CD4-positive, alpha-beta T cell (primary cell): ENCODE measurements at regions of chr5 and their contacts with region 1.

Region 1: DNA sequence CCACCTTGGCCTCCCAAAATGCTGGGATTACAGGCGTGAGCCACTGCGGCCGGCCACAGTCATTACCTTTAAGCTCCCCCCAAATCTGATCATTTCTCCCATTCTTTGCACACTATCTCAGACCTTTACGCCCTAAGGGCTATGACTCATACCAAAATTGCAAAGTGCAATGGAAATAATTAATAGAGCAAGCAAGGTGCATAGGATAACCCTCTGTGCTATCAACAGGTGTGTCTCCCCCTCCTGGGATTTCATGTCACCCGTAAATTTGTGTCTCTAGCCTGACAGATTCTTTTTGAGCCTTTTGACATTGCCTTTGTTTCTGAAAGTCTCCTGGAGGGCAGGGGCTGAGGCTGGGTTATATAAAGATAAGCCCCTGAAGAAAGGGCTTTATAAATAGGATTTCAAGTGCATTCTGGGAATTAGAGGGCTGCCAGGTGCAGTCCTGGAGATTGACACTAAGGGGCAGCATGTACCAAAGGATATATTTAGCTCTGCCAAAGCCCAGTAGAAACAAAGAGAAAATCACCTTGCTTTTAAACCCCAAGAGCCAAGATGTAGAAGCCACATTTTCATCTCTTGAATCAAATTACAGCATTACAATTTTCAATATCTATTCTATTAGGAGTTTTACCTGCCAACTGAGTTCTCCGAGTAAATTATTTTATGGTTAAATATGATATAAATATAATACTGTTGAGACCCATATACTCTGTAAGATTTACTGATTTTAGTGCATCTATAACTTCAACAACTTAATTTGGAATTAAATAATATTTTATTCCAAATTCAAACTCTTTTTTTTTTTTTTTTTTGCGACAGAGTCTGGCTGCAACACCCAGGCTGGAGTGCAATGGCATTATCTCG is 18.2 kb downstream of the S100Z start:
- DNase-seq: peak; percentile 24 to 75 (median 51)
- ATAC-seq: peak; percentile 87
- H3K4me3 ChIP-seq: no peak overlapping the region
- H3K4me3 Mint-ChIP-seq: no peak overlapping the region
- H3K27ac ChIP-seq: no peak overlapping the region
- H3K27ac Mint-ChIP-seq: no peak overlapping the region
- H3K4me1 ChIP-seq: no peaks in the 10 kb centered on the region
- H3K4me1 Mint-ChIP-seq: no peaks in the 10 kb centered on the region
- H3K27me3 ChIP-seq: no peaks in the 10 kb centered on the region
- H3K27me3 Mint-ChIP-seq: no peaks in the 10 kb centered on the region
- CTCF ChIP-seq: peak; percentile 67

Region 2: GRCh38 chr5:76908166-76908565 is 40.1 kb after region 1 on chr5:
- CTCF ChIA-PET with region 1: no interaction called
- POLR2A ChIA-PET with region 1: no interaction called
- intact Hi-C with region 1: no loop called
- DNase-seq: no peak
- ATAC-seq: no peak
- H3K4me3 ChIP-seq: no peak overlapping the region
- H3K4me3 Mint-ChIP-seq: no peak overlapping the region
- H3K27ac ChIP-seq: no peak overlapping the region
- H3K27ac Mint-ChIP-seq: no peak overlapping the region
- H3K4me1 ChIP-seq: no peaks in the 10 kb centered on the region
- H3K4me1 Mint-ChIP-seq: no peaks in the 10 kb centered on the region
- H3K27me3 ChIP-seq: no peaks in the 10 kb centered on the region
- H3K27me3 Mint-ChIP-seq: no peaks in the 10 kb centered on the region
- CTCF ChIP-seq: no peak

Region 3: GRCh38 chr5:77076961-77077823 is 209.1 kb after region 1 on chr5:
- CTCF ChIA-PET with region 1: no interaction called
- POLR2A ChIA-PET with region 1: no interaction called
- intact Hi-C with region 1: loop called (anchors 2 to 5 kb)
- DNase-seq: peak in 12 of 14 experiments; percentile 14 to 73 (median 42)
- ATAC-seq: peak; percentile 80
- H3K4me3 ChIP-seq: peak overlapping the region; percentile 19
- H3K4me3 Mint-ChIP-seq: peak overlapping the region; percentile 68
- H3K27ac ChIP-seq: no peak overlapping the region
- H3K27ac Mint-ChIP-seq: no peak overlapping the region
- H3K4me1 ChIP-seq: peaks cover 7% of the 10 kb centered on the region
- H3K4me1 Mint-ChIP-seq: peaks cover 7% of the 10 kb centered on the region
- H3K27me3 ChIP-seq: no peaks in the 10 kb centered on the region
- H3K27me3 Mint-ChIP-seq: no peaks in the 10 kb centered on the region
- CTCF ChIP-seq: peak; percentile 42

Region 4: DNA sequence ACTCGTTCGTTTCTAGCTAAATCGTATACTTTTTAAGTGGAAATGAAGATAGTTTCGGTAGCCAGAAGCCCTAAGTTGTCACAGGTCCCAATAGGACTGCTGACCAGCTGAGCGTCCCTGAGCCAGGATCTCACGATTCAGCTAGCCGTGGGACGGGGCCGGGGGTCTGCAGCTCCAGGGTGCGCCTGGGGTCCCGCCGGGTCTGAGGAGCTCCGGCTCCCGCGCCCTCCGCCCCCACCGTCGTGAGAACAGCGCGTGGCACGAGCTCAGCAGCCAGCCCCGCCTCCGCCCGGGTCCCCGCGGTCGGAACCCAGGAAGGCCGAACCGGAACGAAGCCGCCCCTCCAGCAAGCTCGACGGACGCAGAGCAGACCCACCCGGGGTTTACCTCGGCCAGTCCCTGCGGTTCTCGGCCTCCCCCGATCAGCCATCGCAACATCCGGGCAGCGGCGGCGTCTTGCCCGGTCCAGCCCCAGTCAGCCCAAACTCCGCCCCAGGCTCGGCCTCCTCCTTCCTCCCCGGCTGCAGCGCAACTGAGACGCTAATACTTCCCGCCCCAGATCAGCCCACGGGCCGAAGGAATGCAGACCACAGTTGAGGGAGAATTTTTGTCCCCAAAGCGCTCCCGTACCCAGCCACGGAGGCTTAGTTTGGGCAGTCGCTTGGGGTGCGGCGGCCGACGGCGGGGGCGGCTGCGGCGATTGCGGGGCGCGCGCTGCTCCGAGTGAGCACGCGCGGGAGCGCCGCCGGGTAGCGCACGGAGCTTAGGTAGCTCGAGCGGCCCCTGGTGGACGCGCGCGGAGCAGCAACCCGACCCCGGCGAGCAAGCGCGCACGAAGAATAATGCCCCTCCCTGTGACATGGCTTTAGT is 624.0 kb after region 1 on chr5 and contains the start of gene WDR41:
- CTCF ChIA-PET with region 1: interaction called, 7 read pairs
- POLR2A ChIA-PET with region 1: interaction called, 7 read pairs
- intact Hi-C with region 1: loop called (anchors 2 kb)
- DNase-seq: peak; percentile 66 to 94 (median 82)
- ATAC-seq: peak; percentile 92
- H3K4me3 ChIP-seq: peak within 1 kb of the TSS; percentile 95
- H3K4me3 Mint-ChIP-seq: peak within 1 kb of the TSS; percentile 96
- H3K27ac ChIP-seq: peak within 1 kb of the TSS; percentile 70 to 72
- H3K27ac Mint-ChIP-seq: peak within 1 kb of the TSS; percentile 69
- H3K4me1 ChIP-seq: peaks cover 11% of the 10 kb centered on the region
- H3K4me1 Mint-ChIP-seq: peaks cover 24% of the 10 kb centered on the region
- H3K27me3 ChIP-seq: no peaks in the 10 kb centered on the region
- H3K27me3 Mint-ChIP-seq: peaks cover 33% of the 10 kb centered on the region
- CTCF ChIP-seq: peak; percentile 91
- total RNA-seq, gene WDR41: 4.2 to 4.4 TPM

Region 5: GRCh38 chr5:78009937-78010527 is 1142.0 kb after region 1 on chr5:
- CTCF ChIA-PET with region 1: no interaction called
- POLR2A ChIA-PET with region 1: no interaction called
- intact Hi-C with region 1: loop called in 1 of 2 experiments (anchors 10 kb)
- DNase-seq: no peak
- ATAC-seq: no peak
- H3K4me3 ChIP-seq: no peak overlapping the region
- H3K4me3 Mint-ChIP-seq: no peak overlapping the region
- H3K27ac ChIP-seq: no peak overlapping the region
- H3K27ac Mint-ChIP-seq: no peak overlapping the region
- H3K4me1 ChIP-seq: no peaks in the 10 kb centered on the region
- H3K4me1 Mint-ChIP-seq: no peaks in the 10 kb centered on the region
- H3K27me3 ChIP-seq: no peaks in the 10 kb centered on the region
- H3K27me3 Mint-ChIP-seq: no peaks in the 10 kb centered on the region
- CTCF ChIP-seq: no peak

Region 6: DNA sequence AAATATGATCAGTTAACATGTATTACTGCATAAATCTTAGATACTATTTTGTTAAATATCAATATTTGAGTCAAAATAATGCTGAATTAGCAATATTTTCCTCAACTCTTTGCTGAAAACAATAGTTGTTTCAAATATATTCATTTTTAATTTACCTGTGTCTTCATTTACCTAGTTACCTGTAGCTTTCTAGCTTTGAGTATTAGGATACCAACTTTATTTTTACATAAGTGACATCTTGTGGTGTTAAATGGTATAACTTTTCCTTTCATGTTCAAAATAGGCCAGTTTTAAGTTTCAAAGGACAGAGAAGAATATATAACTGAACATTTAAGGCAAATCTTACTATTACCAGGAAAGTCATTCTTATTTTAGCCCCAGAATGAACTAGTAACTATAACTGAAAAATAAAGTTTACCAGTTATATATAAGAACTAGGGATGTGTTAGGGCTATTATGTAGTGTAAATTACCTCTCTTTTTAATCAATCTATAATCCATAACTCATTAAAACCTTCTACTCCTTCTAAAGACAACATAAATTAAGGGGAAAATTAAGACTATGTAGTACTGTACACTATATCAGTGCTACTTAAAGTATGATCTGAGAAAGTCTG is 1401.1 kb after region 1 on chr5:
- CTCF ChIA-PET with region 1: interaction called, 3 read pairs
- POLR2A ChIA-PET with region 1: no interaction called
- intact Hi-C with region 1: loop called in 1 of 2 experiments (anchors 2 kb)
- DNase-seq: peak in 3 of 14 experiments; percentile 28 to 38 (median 31)
- ATAC-seq: peak; percentile 68
- H3K4me3 ChIP-seq: no peak overlapping the region
- H3K4me3 Mint-ChIP-seq: no peak overlapping the region
- H3K27ac ChIP-seq: no peak overlapping the region
- H3K27ac Mint-ChIP-seq: no peak overlapping the region
- H3K4me1 ChIP-seq: no peaks in the 10 kb centered on the region
- H3K4me1 Mint-ChIP-seq: peaks cover 29% of the 10 kb centered on the region
- H3K27me3 ChIP-seq: no peaks in the 10 kb centered on the region
- H3K27me3 Mint-ChIP-seq: no peaks in the 10 kb centered on the region
- CTCF ChIP-seq: peak; percentile 68

Region 7: DNA sequence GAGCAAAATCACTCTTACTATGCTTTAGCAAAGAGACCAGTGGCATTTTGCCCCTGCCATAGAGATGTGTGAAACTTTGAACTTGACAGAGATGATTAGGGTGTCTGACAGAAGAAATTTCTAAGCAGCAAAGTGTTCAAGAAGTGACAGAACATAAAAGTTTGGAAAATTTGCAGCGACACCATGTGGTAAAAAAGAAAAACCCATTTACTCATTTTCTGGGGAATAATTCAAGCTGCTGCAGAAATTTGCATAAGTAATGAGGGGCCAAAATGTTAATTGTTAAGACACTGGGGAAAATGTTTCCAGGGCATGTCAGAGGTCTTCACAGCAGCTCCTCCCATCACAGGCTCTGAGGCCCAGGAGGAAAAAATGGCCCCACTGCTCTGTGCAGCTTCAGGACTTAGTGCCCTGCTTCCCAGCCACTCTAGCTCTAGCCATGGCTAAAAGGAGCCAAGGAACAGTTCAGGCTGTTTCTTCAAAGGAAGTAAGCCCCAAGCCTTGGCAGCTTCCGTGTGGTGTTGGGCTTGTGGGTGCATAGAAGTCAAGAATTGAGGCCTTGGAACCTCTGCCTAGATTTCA is 1432.5 kb after region 1 on chr5:
- CTCF ChIA-PET with region 1: interaction called, 5 read pairs
- POLR2A ChIA-PET with region 1: no interaction called
- intact Hi-C with region 1: loop called in 1 of 2 experiments (anchors 10 kb)
- DNase-seq: peak in 3 of 14 experiments; percentile 33 to 54 (median 51)
- ATAC-seq: no peak
- H3K4me3 ChIP-seq: no peak overlapping the region
- H3K4me3 Mint-ChIP-seq: no peak overlapping the region
- H3K27ac ChIP-seq: no peak overlapping the region
- H3K27ac Mint-ChIP-seq: no peak overlapping the region
- H3K4me1 ChIP-seq: peaks cover 4% of the 10 kb centered on the region
- H3K4me1 Mint-ChIP-seq: peaks cover 4% of the 10 kb centered on the region
- H3K27me3 ChIP-seq: no peaks in the 10 kb centered on the region
- H3K27me3 Mint-ChIP-seq: peaks cover 9% of the 10 kb centered on the region
- CTCF ChIP-seq: peak; percentile 45